ENCODE measurements at regions of chr16 and their contacts with region 1.

Region 1: GRCh38 chr16:81198635-81199034 is 39.9 kb upstream of the BCO1 start:
- DNase-seq: no peak
- ATAC-seq: no peak
- H3K4me3 ChIP-seq: no peak overlapping the region
- H3K27ac ChIP-seq: no peak overlapping the region
- H3K4me1 ChIP-seq: peaks cover 6% of the 10 kb centered on the region; the same call in 1 of the 2 replicates
- H3K27me3 ChIP-seq: no peaks in the 10 kb centered on the region
- CTCF ChIP-seq: peak; percentile 22; the same call in 1 of the 2 replicates

Region 2: DNA sequence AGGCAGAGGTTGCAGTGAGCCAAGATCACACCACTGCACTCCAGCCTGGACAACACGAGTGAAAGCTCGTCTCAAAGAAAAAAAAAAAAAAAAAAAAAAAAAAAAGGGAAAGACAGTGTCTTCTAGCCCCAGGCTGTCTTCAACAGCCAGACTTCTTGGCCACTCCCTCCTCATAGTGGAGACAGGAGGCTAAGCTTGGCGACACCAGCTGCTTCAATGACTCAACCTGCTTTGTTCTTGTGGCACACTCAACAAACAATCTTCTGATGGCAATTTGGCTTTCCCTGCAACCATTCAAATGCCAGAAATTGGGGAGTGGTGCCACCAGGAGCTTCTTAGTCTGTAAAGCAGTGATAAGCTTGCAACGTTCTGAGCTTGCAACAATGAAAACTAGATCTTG is 948.3 kb before region 1 on chr16:
- CTCF ChIA-PET with region 1: no interaction called
- POLR2A ChIA-PET with region 1: no interaction called
- intact Hi-C with region 1: no loop called
- DNase-seq: no peak
- ATAC-seq: no peak
- H3K4me3 ChIP-seq: no peak overlapping the region
- H3K27ac ChIP-seq: no peak overlapping the region
- H3K4me1 ChIP-seq: no peaks in the 10 kb centered on the region
- H3K27me3 ChIP-seq: no peaks in the 10 kb centered on the region
- CTCF ChIP-seq: no peak

Region 3: GRCh38 chr16:81080233-81080632 is 118.4 kb before region 1 on chr16:
- CTCF ChIA-PET with region 1: no interaction called
- POLR2A ChIA-PET with region 1: no interaction called
- intact Hi-C with region 1: no loop called
- DNase-seq: no peak
- ATAC-seq: no peak
- H3K4me3 ChIP-seq: no peak overlapping the region
- H3K27ac ChIP-seq: no peak overlapping the region
- H3K4me1 ChIP-seq: peaks cover 6% of the 10 kb centered on the region; the same call in 1 of the 2 replicates
- H3K27me3 ChIP-seq: no peaks in the 10 kb centered on the region
- CTCF ChIP-seq: no peak

Region 4: DNA sequence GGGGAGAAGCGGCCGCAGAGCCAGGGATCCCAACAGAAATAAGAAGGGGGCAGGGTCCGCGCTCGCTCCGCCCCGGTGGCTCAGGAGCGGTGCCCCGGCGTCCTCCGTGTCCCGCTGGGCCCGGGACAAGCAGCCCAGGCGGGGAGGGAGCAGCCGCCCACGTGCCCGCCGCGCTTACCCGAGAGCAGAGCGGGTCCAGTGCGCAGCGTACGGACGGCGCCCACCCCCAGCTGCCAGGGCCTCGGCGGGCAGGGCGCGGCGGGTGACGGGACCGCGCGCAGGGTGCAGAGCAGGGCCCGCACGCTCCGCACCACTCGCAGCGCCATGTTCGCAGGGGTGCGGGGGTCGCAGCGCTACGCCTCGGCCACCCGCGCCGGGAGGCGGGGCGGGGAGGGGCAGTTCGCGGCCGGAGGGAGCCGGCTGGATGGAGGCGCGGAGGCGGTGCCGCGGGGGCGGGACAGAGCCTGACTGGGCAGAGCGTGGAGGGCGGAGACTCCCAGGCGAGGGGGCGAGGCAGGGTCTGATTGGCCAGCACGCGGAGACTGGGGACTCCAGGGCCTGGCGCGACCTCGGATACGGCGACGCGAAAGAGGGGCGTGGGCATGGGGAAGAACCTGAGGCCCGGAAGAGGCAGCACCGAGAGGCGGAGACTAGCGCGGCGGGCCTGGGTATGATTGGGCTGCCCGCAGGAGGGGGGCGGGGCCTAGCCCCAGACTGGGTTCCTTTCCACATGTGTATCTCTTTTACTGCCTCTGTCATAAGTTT is 102.5 kb before region 1 on chr16 and contains the start of gene GCSH:
- CTCF ChIA-PET with region 1: no interaction called
- POLR2A ChIA-PET with region 1: no interaction called
- intact Hi-C with region 1: loop called (anchors 10 kb)
- DNase-seq: peak; percentile 93
- ATAC-seq: peak; percentile 98
- H3K4me3 ChIP-seq: peak within 1 kb of the TSS; percentile 91
- H3K27ac ChIP-seq: peak within 1 kb of the TSS; percentile 6; the same call in 1 of the 2 replicates
- H3K4me1 ChIP-seq: peaks cover 13% of the 10 kb centered on the region
- H3K27me3 ChIP-seq: no peaks in the 10 kb centered on the region
- CTCF ChIP-seq: no peak
- total RNA-seq, gene GCSH: 36.1 and 47.5 TPM in 2 replicates

Region 5: DNA sequence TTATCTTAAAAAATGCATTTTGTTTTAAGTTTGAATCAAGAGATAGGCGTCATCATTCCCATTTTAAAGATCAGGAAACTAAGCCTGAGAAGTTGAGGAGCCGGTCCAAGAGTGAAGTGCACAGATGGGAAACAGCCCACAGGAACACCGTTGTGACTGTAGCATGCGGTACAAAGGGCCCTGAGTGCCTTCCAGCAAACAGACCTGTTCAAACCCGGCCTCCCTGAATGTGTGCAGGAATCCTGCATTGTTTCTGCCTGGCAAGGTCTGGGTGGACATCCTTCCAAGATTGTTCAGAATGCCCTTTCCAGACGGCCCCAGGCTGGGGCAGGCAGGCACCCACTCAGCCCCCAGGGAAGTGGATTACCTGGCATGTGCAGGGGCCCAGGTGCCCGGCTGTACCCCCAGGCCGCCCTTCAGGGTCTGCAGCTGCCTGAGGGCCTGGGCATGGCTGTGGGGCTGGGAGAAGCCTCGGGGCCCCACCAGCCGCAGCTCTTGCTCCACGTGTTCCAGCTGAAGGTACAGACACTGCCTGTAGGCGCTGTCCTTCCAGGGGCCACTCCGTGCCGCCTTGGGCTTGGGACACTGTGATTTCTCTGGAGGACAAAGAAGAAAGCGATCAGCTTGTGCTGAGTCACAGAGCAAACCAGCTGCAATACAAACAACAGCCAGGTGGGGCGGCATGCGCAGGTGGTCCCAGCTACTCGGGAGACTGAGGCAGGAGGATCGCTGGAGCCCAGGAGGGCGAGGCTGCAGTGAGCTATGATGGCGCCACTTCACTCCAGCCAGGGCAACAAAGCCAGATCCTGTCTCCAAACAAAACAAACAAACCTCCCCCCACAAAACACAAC is 57.5 kb before region 1 on chr16:
- CTCF ChIA-PET with region 1: no interaction called
- POLR2A ChIA-PET with region 1: no interaction called
- intact Hi-C with region 1: no loop called
- DNase-seq: peak; percentile 12
- ATAC-seq: no peak
- H3K4me3 ChIP-seq: no peak overlapping the region
- H3K27ac ChIP-seq: no peak overlapping the region
- H3K4me1 ChIP-seq: 0 out of 2 replicates have a peak, but pooled peaks cover 4% of the 10 kb centered on the region
- H3K27me3 ChIP-seq: no peaks in the 10 kb centered on the region
- CTCF ChIP-seq: peak; percentile 45

Region 6: GRCh38 chr16:81151648-81152310 is 46.9 kb before region 1 on chr16:
- CTCF ChIA-PET with region 1: no interaction called
- POLR2A ChIA-PET with region 1: no interaction called
- intact Hi-C with region 1: no loop called
- DNase-seq: no peak
- ATAC-seq: no peak
- H3K4me3 ChIP-seq: no peak overlapping the region
- H3K27ac ChIP-seq: no peak overlapping the region
- H3K4me1 ChIP-seq: no peaks in the 10 kb centered on the region
- H3K27me3 ChIP-seq: no peaks in the 10 kb centered on the region
- CTCF ChIP-seq: no peak

Measured in PC-3 (cell line).